ENCODE measurements at regions of chr10 and their contacts with region 1.

Region 1: DNA sequence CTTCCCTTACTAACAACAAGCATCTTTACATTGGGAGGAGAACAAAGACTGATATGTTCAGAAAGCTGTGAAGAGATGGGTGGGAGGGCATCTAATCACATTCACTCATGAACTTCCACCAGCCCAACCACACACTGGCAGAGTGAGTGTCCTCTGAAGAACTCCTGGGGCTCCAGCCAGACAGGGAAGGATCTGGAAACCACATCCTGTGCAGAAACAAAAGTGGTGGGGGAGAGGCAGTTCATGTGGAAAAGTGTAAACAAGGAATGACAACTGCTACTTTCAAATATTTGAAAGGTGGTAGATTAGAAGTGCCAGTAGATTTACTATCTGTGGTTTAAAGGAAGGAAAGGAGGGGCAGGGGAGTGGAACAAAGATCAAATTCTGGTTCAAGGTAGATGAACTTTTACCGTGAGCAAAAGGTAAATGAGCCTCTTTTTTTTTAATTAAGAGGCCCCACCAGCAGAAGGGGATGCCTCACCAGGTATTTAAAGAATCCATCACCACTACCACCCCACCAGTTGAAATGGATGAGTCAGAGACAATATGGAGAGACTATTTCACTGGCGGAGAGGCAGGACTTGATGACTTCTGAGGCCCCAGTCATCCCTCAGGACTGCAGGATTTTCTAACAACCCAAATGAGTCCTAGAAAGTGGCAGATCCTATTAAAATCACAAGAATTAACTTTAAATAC is 34.5 kb downstream of the GOT1 start:
- DNase-seq: no peak
- ATAC-seq: no peak
- H3K4me3 ChIP-seq: no peak overlapping the region
- H3K27ac ChIP-seq: peak overlapping the region; percentile 2 to 63 (median 48)
- H3K4me1 ChIP-seq: peaks cover 21 to 24% of the 10 kb centered on the region in 2 donors
- H3K27me3 ChIP-seq: no peaks in the 10 kb centered on the region
- CTCF ChIP-seq: no peak
- POLR2A ChIP-seq: no peak

Region 2: GRCh38 chr10:99435986-99436638 is 40.2 kb after region 1 on chr10:
- in situ Hi-C with region 1: loop called in 1 of 4 experiments (anchors 5 kb)
- intact Hi-C with region 1: loop called (anchors 1 kb)
- DNase-seq: no peak
- ATAC-seq: peak; percentile 45 to 48
- H3K4me3 ChIP-seq: no peak overlapping the region
- H3K27ac ChIP-seq: peak overlapping the region in 3 of 4 donors; percentile 26 to 97 (median 96)
- H3K4me1 ChIP-seq: peaks cover 54 to 58% of the 10 kb centered on the region in 2 donors
- H3K27me3 ChIP-seq: no peaks in the 10 kb centered on the region
- CTCF ChIP-seq: peak in 4 of 5 experiments; percentile 47 to 57 (median 50)
- POLR2A ChIP-seq: no peak

Region 3: DNA sequence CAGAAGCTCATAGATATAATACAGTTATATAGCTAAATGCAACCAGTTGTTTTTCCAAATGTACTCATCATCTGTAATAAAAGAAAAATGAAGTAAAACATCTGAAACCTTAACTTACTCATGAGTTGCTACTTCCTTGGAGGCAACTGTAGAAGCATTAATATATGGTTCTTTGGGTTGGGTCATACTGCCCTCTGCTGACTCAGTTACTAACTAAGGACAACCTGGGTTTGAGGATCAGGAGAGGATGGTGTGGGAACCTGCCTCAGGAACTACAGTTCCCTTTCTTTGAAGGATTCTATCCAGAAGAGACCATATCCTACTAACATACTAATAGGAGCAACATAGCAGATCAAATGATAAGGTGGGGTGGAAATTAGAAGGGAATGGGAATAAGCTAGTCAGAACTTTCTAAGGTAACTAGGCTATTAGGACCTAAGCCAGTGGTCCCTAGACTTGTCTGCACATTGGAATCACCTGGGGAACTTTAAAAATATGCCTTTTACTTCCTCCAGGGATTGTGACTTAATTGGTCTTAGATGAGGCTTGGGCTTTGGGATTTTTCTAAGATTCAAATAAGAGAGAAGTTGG is 315.3 kb after region 1 on chr10:
- in situ Hi-C with region 1: no loop called
- intact Hi-C with region 1: loop called (anchors 5 kb)
- DNase-seq: no peak
- ATAC-seq: peak; percentile 54 to 75
- H3K4me3 ChIP-seq: no peak overlapping the region
- H3K27ac ChIP-seq: no peak overlapping the region
- H3K4me1 ChIP-seq: no peaks in the 10 kb centered on the region
- H3K27me3 ChIP-seq: no peaks in the 10 kb centered on the region
- CTCF ChIP-seq: peak in 3 of 5 experiments; percentile 25 to 52 (median 34)
- POLR2A ChIP-seq: no peak

Region 4: GRCh38 chr10:99917963-99918825 is 522.3 kb after region 1 on chr10:
- in situ Hi-C with region 1: no loop called
- intact Hi-C with region 1: no loop called
- DNase-seq: no peak
- ATAC-seq: no peak
- H3K4me3 ChIP-seq: peak overlapping the region; percentile 2 to 43 (median 27)
- H3K27ac ChIP-seq: peak overlapping the region; percentile 8 to 52 (median 13)
- H3K4me1 ChIP-seq: peaks cover 14 to 15% of the 10 kb centered on the region in 2 donors
- H3K27me3 ChIP-seq: no peaks in the 10 kb centered on the region
- CTCF ChIP-seq: no peak
- POLR2A ChIP-seq: no peak